ENCODE measurements at regions of chr11 and their contacts with region 1.

Region 1: GRCh38 chr11:67665541-67666362 is 8.7 kb downstream of the ALDH3B2 start:
- DNase-seq: peak in 4 of 6 donors; percentile 51 to 82 (median 62)
- ATAC-seq: peak; percentile 58 to 93 (median 72)
- H3K4me3 ChIP-seq: no peak overlapping the region
- H3K27ac ChIP-seq: no peak overlapping the region
- H3K4me1 ChIP-seq: no peaks in the 10 kb centered on the region
- H3K27me3 ChIP-seq: no peaks in the 10 kb centered on the region
- CTCF ChIP-seq: peak in 3 of 4 donors; percentile 13 to 19 (median 15)

Region 2: GRCh38 chr11:67439321-67439883 is 226.3 kb before region 1 on chr11:
- intact Hi-C with region 1: no loop called
- DNase-seq: peak in 3 of 6 donors; percentile 53 to 76 (median 62)
- ATAC-seq: no peak
- H3K4me3 ChIP-seq: no peak overlapping the region
- H3K27ac ChIP-seq: no peak overlapping the region
- H3K4me1 ChIP-seq: peaks cover 0 to 10% (median 5%) of the 10 kb centered on the region in 3 donors
- H3K27me3 ChIP-seq: no peaks in the 10 kb centered on the region
- CTCF ChIP-seq: no peak

Region 3: DNA sequence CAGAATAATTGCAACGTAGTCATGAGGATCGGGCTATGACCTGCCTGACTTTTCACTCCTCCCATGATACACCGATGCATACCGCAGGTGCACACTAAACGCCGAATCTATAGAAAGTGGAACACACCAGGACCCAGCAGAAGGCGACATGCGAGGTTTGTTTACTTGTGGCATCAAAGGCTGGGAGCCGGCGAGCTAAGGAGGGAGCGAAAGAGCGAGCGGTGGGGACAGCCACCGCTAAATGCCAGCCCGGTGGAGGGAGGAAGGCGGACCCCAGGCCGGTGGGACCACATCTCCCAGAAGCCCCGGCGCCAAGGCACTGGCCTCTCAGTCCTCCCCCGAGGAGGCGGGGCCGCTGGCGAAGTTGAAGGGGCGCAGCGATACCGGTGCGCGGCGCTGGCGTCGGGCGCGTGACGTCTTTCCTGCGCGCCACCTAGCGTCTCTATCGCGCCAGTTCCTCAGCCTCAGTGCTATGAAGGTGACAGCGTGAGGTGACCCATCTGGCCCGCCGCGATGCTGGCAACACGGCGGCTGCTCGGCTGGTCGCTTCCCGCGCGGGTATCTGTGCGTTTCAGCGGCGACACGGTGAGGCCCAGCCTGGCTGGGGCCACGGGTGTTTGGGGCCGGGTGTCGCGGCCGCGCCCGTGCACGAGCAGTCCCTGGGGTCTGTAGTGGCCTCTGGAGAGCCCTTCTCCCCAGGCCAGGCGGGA is 59.1 kb before region 1 on chr11 and contains the start of gene NDUFV1:
- intact Hi-C with region 1: no loop called
- DNase-seq: peak; percentile 96 to 99 (median 98)
- ATAC-seq: peak; percentile 99
- H3K4me3 ChIP-seq: peak within 1 kb of the TSS; percentile 90 to 99 (median 98)
- H3K27ac ChIP-seq: peak within 1 kb of the TSS; percentile 28 to 65 (median 54)
- H3K4me1 ChIP-seq: peaks cover 0 to 10% (median 0%) of the 10 kb centered on the region in 3 donors
- H3K27me3 ChIP-seq: no peaks in the 10 kb centered on the region
- CTCF ChIP-seq: peak; percentile 38 to 71 (median 60)
- total RNA-seq, gene NDUFV1: 82.5 to 126 (median 109) TPM

Region 4: DNA sequence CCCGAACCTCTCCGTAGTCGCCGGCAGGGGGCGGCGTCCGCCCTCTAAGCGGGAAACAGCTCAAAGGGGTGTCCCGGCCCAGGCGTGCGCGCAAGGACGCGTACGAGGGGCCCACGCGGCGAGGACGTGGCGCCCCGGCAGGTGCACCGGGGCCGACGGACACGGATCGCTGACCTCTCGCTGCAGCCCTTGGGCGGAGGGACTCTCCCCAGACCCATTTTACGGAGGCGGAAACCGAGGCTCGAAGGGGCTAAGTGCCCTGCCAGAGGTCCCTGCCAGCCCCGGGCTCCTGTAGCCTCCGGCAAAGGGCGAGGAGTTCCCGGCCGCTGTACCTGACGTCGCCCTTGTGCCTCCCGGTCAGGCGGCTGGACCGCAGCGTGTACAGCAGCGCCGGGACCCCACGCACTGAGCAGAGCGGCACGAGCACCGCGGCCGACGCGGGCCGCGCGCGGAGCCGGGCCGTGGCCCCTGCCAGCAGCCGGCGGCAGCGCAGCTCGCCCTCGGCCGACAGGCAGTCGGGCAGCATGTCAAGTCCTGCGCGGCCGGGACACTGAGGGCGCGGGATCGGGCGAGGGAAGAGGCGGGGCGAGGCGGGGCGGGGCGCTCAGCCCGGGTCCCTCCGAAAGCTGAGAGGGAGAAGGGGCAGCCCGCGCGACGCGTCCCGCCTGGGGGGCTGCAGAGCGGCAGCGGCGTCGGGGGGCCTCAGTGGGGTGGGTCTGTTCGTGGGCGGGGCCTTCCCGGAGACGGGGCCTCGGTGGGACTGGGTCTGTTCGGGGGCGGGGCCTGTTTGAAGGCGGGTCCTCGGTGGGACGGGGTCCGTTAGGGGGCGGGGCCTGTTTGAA is 36.1 kb before region 1 on chr11 and contains the start of gene NUDT8:
- intact Hi-C with region 1: loop called in 1 of 3 experiments (anchors 5 kb)
- DNase-seq: peak; percentile 72 to 94 (median 87)
- ATAC-seq: peak; percentile 60 to 73 (median 63)
- H3K4me3 ChIP-seq: peak within 1 kb of the TSS; percentile 42 to 73 (median 54)
- H3K27ac ChIP-seq: peak within 1 kb of the TSS; percentile 84 to 89 (median 86)
- H3K4me1 ChIP-seq: peaks cover 11 to 23% (median 23%) of the 10 kb centered on the region in 3 donors
- H3K27me3 ChIP-seq: no peaks in the 10 kb centered on the region
- CTCF ChIP-seq: peak; percentile 83 to 86 (median 84)
- total RNA-seq, gene NUDT8: 4.3 to 7.3 (median 5.8) TPM

Region 5: DNA sequence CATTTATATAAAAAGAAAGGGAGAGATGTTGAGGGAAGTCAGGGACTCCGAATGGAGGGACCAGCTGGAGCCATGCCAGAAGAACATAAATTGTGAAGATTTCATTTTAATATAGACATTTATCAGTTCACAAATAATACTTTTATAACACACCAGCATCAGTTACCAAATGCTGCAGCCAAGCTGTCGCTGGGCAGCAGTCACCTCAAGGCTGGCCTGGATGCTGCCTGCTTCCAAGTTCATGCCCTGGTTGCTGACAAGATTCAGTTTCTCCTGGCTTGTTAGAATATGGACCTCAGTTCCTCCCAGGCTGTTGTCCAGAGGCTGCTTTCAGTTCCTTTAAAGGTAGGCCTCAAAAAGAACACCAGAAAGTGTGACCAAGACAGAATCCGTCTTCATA is 39.5 kb after region 1 on chr11:
- intact Hi-C with region 1: loop called in 1 of 3 experiments (anchors 10 kb)
- DNase-seq: no peak
- ATAC-seq: no peak
- H3K4me3 ChIP-seq: no peak overlapping the region
- H3K27ac ChIP-seq: no peak overlapping the region
- H3K4me1 ChIP-seq: no peaks in the 10 kb centered on the region
- H3K27me3 ChIP-seq: no peaks in the 10 kb centered on the region
- CTCF ChIP-seq: no peak

Measured in pancreas (tissue), 10 donors.